ENCODE measurements at regions of chr7 and their contacts with region 1.

Region 1: GRCh38 chr7:31122649-31123058 is 70.5 kb downstream of the ADCYAP1R1 start:
- DNase-seq: peak; percentile 64
- ATAC-seq: peak; percentile 34
- H3K4me3 Mint-ChIP-seq: no peak overlapping the region
- H3K27ac Mint-ChIP-seq: no peak overlapping the region
- H3K4me1 Mint-ChIP-seq: no peaks in the 10 kb centered on the region
- H3K27me3 Mint-ChIP-seq: peaks cover 9% of the 10 kb centered on the region
- CTCF ChIP-seq: peak; percentile 74

Region 2: DNA sequence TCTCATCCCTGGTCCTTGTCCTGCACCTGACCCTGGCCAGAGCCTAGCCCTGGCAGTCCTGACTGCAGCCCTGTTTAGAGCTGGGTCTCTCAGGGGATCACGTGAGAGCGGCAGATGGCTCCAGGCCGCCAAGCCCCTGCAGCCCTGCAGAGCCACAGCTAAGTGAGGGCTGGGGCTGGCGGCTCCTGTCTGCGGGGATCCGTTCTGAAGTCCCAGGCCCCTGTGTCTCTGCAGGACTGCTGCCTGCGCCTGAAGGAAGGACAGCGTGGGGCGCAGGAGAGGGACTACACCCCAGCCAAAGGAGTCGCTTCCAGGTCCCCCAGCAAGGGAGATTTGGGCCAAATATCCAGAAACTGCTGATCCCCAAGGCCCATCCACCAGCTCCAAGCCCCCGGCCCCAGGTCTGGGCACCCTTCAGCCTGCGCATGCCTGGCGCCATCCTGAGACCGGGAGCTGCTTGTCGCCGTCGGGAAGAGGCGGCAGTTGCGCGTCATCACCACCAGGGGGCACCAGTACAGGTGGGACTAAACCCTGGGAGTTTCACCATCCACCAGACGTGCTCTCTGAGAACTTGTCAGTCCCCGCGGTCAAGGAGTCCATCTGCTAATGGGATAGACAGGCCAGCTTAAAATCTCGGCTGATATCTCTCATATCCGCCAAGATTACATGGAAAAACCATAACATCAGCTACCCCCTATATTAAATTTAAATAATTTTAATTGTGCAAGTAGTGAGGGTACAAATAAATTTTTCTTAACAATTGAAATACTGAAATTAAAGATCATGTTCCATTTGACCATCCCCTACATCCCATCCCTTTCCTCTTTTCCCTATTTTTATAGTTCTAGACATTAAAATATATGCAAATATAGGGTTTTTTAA is 184.0 kb before region 1 on chr7:
- CTCF ChIA-PET with region 1: interaction called, 14 read pairs
- POLR2A ChIA-PET with region 1: interaction called, 3 read pairs
- intact Hi-C with region 1: no loop called
- DNase-seq: peak; percentile 76
- ATAC-seq: peak; percentile 87
- H3K4me3 Mint-ChIP-seq: no peak overlapping the region
- H3K27ac Mint-ChIP-seq: no peak overlapping the region
- H3K4me1 Mint-ChIP-seq: no peaks in the 10 kb centered on the region
- H3K27me3 Mint-ChIP-seq: peaks cover 19% of the 10 kb centered on the region
- CTCF ChIP-seq: peak; percentile 91

Region 3: GRCh38 chr7:30983042-30983913 is 139.4 kb before region 1 on chr7:
- CTCF ChIA-PET with region 1: interaction called, 275 read pairs
- POLR2A ChIA-PET with region 1: no interaction called
- intact Hi-C with region 1: loop called (anchors 1 kb)
- DNase-seq: peak; percentile 85
- ATAC-seq: peak; percentile 95
- H3K4me3 Mint-ChIP-seq: no peak overlapping the region
- H3K27ac Mint-ChIP-seq: no peak overlapping the region
- H3K4me1 Mint-ChIP-seq: no peaks in the 10 kb centered on the region
- H3K27me3 Mint-ChIP-seq: peaks cover 39% of the 10 kb centered on the region
- CTCF ChIP-seq: peak; percentile 90

Region 4: GRCh38 chr7:31110331-31111108 is 12.1 kb before region 1 on chr7:
- CTCF ChIA-PET with region 1: interaction called, 13 read pairs
- POLR2A ChIA-PET with region 1: no interaction called
- intact Hi-C with region 1: no loop called
- DNase-seq: no peak
- ATAC-seq: no peak
- H3K4me3 Mint-ChIP-seq: no peak overlapping the region
- H3K27ac Mint-ChIP-seq: no peak overlapping the region
- H3K4me1 Mint-ChIP-seq: no peaks in the 10 kb centered on the region
- H3K27me3 Mint-ChIP-seq: peaks cover 3% of the 10 kb centered on the region
- CTCF ChIP-seq: no peak

Region 5: DNA sequence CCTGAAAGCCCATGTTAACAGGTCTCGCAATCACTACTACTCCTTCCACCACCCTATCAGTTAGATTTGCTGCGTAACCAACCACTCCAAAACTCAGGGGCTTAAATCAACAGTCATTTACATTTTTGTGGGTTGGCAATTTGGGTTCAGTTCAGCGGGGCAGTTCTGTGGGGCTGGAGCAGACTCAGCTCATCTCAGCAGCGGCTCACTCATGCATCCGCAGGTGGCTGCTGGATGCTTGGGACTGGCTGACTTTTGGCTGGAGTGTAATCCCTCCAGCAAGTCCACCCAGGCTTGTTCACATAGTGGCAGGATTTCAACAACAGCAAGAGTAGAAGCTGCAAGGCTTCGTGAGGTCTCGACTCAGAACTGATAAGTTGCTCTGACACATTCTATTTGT is 138.7 kb after region 1 on chr7:
- CTCF ChIA-PET with region 1: no interaction called
- POLR2A ChIA-PET with region 1: no interaction called
- intact Hi-C with region 1: no loop called
- DNase-seq: no peak
- ATAC-seq: no peak
- H3K4me3 Mint-ChIP-seq: no peak overlapping the region
- H3K27ac Mint-ChIP-seq: no peak overlapping the region
- H3K4me1 Mint-ChIP-seq: no peaks in the 10 kb centered on the region
- H3K27me3 Mint-ChIP-seq: no peaks in the 10 kb centered on the region
- CTCF ChIP-seq: no peak

Region 6: DNA sequence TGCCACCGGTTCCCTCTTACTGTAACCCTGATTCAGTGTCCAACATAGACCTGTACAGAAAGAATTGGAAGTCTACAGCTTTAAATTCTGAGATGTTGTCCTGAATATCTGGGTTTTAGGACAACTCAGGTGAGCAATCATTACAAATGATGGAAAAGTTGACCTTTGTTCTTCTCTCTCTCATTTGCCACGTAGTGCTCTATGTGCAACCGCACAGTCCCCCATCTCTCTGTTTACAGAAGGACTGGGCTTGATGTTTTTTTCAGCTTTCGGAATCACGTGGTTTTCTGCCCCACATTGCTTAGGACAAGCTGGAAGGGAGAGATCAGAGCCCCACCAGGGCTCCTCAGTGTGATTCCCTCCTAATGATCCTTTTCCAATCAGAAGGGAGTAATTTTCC is 195.7 kb after region 1 on chr7:
- CTCF ChIA-PET with region 1: no interaction called
- POLR2A ChIA-PET with region 1: no interaction called
- intact Hi-C with region 1: no loop called
- DNase-seq: no peak
- ATAC-seq: no peak
- H3K4me3 Mint-ChIP-seq: no peak overlapping the region
- H3K27ac Mint-ChIP-seq: no peak overlapping the region
- H3K4me1 Mint-ChIP-seq: no peaks in the 10 kb centered on the region
- H3K27me3 Mint-ChIP-seq: no peaks in the 10 kb centered on the region
- CTCF ChIP-seq: no peak

Region 7: DNA sequence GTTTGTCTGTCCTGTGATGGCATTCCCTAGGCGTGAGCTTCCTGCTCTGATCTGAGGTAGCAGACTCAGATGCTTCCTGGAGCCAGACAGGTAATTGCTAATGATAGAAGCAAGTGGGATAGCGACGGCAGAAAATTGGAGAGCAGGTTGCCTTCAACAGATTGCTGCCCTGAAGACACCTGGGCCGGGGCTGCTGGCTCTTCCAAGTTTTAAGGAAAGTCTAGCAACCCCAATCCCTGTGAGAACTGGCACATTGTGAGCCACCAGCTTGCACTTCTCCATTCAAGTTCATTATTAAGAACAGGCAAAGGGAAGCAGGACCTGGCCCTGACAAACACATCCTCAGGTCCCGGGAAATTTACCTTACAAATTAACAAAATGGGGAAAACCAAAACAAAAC is 442.0 kb after region 1 on chr7:
- CTCF ChIA-PET with region 1: no interaction called
- POLR2A ChIA-PET with region 1: no interaction called
- intact Hi-C with region 1: no loop called
- DNase-seq: no peak
- ATAC-seq: no peak
- H3K4me3 Mint-ChIP-seq: no peak overlapping the region
- H3K27ac Mint-ChIP-seq: no peak overlapping the region
- H3K4me1 Mint-ChIP-seq: no peaks in the 10 kb centered on the region
- H3K27me3 Mint-ChIP-seq: no peaks in the 10 kb centered on the region
- CTCF ChIP-seq: no peak

Measured in activated CD8-positive, alpha-beta T cell treated with anti-CD3 and anti-CD28 coated beads for 36 hours (primary cell).